PC-9 (cell line): ENCODE measurements at regions of chr12 and their contacts with region 1.

Region 1: GRCh38 chr12:10749700-10750384 is 26.7 kb upstream of the YBX3 start:
- DNase-seq: peak; percentile 83 to 85
- H3K4me3 ChIP-seq: peak overlapping the region; percentile 48
- H3K27ac ChIP-seq: no peak overlapping the region
- H3K4me1 ChIP-seq: no peaks in the 10 kb centered on the region
- H3K27me3 ChIP-seq: no peaks in the 10 kb centered on the region
- CTCF ChIP-seq: peak; percentile 93

Region 2: DNA sequence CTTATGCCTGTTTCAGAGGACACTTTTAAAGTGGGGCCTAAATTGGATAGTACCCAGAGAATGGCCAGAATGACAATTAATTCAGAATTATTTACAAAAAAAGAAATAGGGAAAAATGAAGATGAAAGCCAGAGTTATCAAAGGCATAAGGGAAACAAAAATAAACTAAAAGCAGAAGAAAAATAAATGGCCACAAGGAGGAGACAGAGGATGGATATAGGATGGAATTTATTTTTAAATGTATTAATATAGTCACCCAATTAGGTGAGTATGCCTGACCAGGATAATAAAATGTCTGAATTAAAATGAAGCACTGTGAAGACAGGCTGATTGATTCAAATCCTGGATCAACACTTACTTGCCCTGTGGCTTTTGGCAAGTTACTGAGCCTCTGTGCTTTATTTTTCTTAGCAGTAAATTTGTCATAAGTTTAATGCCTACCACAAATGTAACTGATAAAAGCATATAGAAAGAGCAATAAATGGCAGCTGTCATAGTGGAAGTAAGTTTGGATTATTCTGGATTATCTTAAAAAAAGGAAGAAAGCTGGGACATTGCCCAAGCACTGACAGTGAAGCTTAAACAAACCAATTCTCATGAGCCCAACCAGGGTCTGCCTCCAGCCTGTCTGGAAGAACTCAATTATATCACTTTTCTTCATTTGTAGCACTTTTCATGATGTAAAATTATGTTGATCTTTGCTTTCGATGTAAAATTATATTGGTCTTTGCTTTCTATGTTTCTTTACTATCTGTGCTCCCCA is 715.9 kb before region 1 on chr12:
- CTCF ChIA-PET with region 1: no interaction called
- POLR2A ChIA-PET with region 1: no interaction called
- intact Hi-C with region 1: loop called (anchors 10 kb)
- DNase-seq: no peak
- H3K4me3 ChIP-seq: no peak overlapping the region
- H3K27ac ChIP-seq: no peak overlapping the region
- H3K4me1 ChIP-seq: no peaks in the 10 kb centered on the region
- H3K27me3 ChIP-seq: no peaks in the 10 kb centered on the region
- CTCF ChIP-seq: peak; percentile 80

Region 3: GRCh38 chr12:10331642-10332239 is 418.1 kb before region 1 on chr12:
- CTCF ChIA-PET with region 1: no interaction called
- POLR2A ChIA-PET with region 1: no interaction called
- intact Hi-C with region 1: loop called (anchors 1 kb)
- DNase-seq: peak in 1 of 2 experiments; percentile 19
- H3K4me3 ChIP-seq: no peak overlapping the region
- H3K27ac ChIP-seq: no peak overlapping the region
- H3K4me1 ChIP-seq: no peaks in the 10 kb centered on the region
- H3K27me3 ChIP-seq: no peaks in the 10 kb centered on the region
- CTCF ChIP-seq: peak; percentile 79

Region 4: GRCh38 chr12:10562306-10562933 is 187.4 kb before region 1 on chr12:
- CTCF ChIA-PET with region 1: no interaction called
- POLR2A ChIA-PET with region 1: no interaction called
- intact Hi-C with region 1: loop called (anchors 1 kb)
- DNase-seq: peak in 1 of 2 experiments; percentile 28
- H3K4me3 ChIP-seq: no peak overlapping the region
- H3K27ac ChIP-seq: no peak overlapping the region
- H3K4me1 ChIP-seq: no peaks in the 10 kb centered on the region
- H3K27me3 ChIP-seq: no peaks in the 10 kb centered on the region
- CTCF ChIP-seq: peak; percentile 87

Region 5: GRCh38 chr12:10716704-10717315 is 33.0 kb before region 1 on chr12:
- CTCF ChIA-PET with region 1: interaction called, 13 read pairs
- POLR2A ChIA-PET with region 1: no interaction called
- intact Hi-C with region 1: loop called (anchors 1 kb)
- DNase-seq: peak; percentile 88 to 94
- H3K4me3 ChIP-seq: peak overlapping the region; percentile 42; the same call in 1 of the 2 replicates
- H3K27ac ChIP-seq: peak overlapping the region; percentile 78
- H3K4me1 ChIP-seq: peaks cover 57% of the 10 kb centered on the region
- H3K27me3 ChIP-seq: no peaks in the 10 kb centered on the region
- CTCF ChIP-seq: no peak

Region 6: DNA sequence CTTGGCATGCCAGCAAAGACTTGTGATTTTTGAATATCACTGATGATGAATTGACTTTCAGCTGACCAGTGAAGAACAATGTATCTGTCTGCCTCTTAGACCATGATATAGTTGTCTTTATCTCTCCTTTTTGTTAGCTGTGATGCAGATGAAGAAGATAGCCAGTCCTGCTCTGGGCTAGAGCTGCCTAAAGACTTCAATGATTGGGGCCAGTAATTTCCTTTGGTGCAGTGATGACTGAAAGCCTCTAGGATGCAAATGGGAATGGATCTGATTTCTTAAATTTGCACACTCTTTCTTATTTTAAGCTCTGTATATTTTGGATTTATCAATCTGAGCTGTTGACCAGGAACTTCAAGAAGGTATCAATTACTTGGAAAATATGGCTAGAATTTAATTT is 60.2 kb after region 1 on chr12 and contains the start of gene TAS2R9:
- CTCF ChIA-PET with region 1: no interaction called
- POLR2A ChIA-PET with region 1: no interaction called
- intact Hi-C with region 1: no loop called
- DNase-seq: no peak
- H3K4me3 ChIP-seq: no peak within 1 kb of the TSS
- H3K27ac ChIP-seq: no peak within 1 kb of the TSS
- H3K4me1 ChIP-seq: no peaks in the 10 kb centered on the region
- H3K27me3 ChIP-seq: no peaks in the 10 kb centered on the region
- CTCF ChIP-seq: no peak
- total RNA-seq, gene TAS2R9: not detected in 2 replicates

Region 7: DNA sequence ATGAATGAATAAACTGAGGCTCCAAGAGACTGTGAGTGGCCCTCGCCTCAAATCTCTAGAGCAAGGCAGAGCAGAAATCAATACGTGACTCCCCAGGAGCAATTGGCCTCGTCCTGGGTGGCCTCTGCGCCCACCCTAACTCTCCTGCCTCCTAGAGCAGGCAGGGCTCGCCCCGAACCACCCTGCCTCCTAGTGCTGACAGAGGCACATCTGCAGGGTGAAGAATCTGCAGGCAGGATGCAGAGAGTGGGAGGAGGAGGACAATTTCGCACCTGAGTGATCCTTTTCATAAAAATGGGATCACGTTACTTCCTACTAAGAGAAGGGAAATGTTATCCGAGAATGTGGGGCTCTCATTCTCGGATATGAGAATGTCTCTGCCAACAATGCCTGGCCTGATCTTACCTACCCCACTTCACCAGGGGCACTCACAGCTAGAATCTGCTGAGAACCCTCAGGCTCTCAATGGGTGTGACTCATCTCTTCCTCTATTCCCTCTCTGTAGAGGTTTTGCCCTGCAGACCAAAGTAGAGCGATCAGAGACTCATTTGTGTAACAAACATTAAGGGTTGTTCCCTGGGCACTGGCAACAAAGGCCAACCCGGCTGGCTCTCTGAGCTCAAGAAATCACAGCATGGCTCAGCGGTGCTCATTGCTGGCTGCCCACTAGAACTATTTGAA is 1259.2 kb after region 1 on chr12:
- CTCF ChIA-PET with region 1: no interaction called
- POLR2A ChIA-PET with region 1: interaction called, 11 read pairs
- intact Hi-C with region 1: no loop called
- DNase-seq: peak; percentile 80 to 98
- H3K4me3 ChIP-seq: no peak overlapping the region
- H3K27ac ChIP-seq: peak overlapping the region; percentile 94
- H3K4me1 ChIP-seq: peaks cover 45% of the 10 kb centered on the region
- H3K27me3 ChIP-seq: no peaks in the 10 kb centered on the region
- CTCF ChIP-seq: no peak; the same call in 1 of the 2 replicates